CD4-positive, alpha-beta T cell (primary cell): ENCODE measurements at regions of chr1 and their contacts with region 1.

Region 1: DNA sequence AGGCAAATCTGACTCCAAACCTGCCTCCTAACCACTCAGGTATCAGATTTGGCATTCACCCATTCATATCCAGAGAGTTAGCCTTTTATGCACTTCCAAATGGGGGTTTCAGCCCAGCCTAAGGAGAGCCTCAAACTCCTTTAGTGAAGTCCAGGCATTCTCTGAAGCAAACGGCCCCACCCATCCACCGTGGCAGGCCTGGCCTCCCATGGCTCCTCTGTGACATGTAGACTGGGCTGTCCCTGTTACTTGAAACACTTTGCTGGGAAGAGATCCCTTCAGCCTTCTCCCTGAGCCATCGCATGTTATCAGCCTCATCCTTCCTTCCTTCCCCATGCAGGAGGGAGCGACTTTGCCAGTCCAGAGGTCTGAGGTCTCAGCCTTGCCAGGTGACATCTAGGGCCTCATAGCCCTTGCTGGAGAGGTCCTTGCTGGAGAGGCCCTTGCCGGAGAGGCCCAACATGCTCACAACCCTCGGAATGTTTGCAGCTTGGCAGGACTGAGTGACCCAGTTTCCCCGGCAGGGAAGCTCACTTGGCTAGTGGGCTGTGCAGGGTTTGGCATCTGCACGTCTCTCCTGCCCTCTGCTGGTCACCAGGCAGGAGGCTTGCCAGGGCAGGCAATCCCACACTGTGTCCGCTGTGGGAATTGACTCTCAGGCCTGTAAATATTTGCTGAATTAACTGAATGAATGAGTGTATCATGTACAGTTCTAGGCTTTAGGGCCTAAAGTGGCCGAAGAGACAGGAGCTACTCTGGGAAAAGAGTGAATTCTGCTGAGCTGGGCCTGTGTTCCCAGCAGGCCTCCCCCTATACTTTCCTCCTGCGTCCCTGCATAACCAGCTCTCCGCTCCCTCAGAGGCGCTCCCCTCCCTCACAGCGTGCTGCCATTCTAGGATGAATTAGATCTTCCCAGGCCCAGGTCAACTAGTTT is 26.7 kb upstream of the RBM15 start:
- DNase-seq: peak; percentile 62 to 86 (median 70)
- ATAC-seq: peak; percentile 99
- H3K4me3 ChIP-seq: no peak overlapping the region
- H3K4me3 Mint-ChIP-seq: no peak overlapping the region
- H3K27ac ChIP-seq: no peak overlapping the region
- H3K27ac Mint-ChIP-seq: no peak overlapping the region
- H3K4me1 ChIP-seq: peaks cover 7% of the 10 kb centered on the region
- H3K4me1 Mint-ChIP-seq: no peaks in the 10 kb centered on the region
- H3K27me3 ChIP-seq: no peaks in the 10 kb centered on the region
- H3K27me3 Mint-ChIP-seq: no peaks in the 10 kb centered on the region
- CTCF ChIP-seq: peak; percentile 92

Region 2: DNA sequence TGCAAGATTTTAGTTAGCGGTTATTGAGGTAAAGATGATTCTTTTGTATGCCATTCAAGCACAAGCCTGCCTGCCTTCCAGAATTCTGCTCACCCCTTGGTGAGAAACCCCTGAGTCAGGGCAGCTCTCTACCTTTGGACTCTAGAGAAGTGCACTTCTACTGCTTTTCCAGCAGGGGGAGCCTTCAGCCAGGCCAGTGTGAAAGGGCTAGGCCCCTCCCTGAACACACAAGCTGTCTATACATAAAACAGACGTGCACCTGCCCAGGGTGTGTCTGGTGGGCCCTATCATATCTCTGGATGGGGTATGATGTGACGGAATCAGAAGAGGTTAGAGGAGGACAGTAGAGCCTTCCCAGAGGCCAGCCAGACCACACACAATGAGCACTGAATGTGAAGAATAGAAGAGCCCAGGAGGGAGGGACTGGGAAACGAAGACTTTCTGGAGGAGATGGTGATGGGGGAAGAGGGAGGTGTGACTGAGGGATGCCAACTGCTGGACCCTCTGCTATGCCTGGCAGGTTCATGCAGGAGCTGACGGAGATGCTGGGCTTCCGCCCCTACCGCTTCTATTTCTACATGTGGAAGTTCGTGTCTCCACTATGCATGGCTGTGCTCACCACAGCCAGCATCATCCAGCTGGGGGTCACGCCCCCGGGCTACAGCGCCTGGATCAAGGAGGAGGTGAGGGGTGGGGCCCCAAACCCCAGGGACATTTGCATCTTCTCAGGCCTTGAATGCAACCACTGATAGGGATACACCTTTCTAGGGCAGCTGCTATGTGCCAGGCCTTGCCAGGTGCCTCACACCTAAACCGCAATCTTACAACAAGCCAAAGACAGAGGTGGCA is 115.3 kb before region 1 on chr1:
- CTCF ChIA-PET with region 1: interaction called, 60 read pairs
- POLR2A ChIA-PET with region 1: interaction called, 5 read pairs
- intact Hi-C with region 1: no loop called
- DNase-seq: peak; percentile 24 to 75 (median 38)
- ATAC-seq: peak; percentile 99
- H3K4me3 ChIP-seq: no peak overlapping the region
- H3K4me3 Mint-ChIP-seq: no peak overlapping the region
- H3K27ac ChIP-seq: no peak overlapping the region
- H3K27ac Mint-ChIP-seq: no peak overlapping the region
- H3K4me1 ChIP-seq: no peaks in the 10 kb centered on the region
- H3K4me1 Mint-ChIP-seq: no peaks in the 10 kb centered on the region
- H3K27me3 ChIP-seq: no peaks in the 10 kb centered on the region
- H3K27me3 Mint-ChIP-seq: no peaks in the 10 kb centered on the region
- CTCF ChIP-seq: peak; percentile 96

Region 3: GRCh38 chr1:110203021-110203661 is 109.3 kb before region 1 on chr1:
- CTCF ChIA-PET with region 1: interaction called, 123 read pairs
- POLR2A ChIA-PET with region 1: interaction called, 41 read pairs
- intact Hi-C with region 1: loop called (anchors 1 kb)
- DNase-seq: peak; percentile 22 to 88 (median 60)
- ATAC-seq: peak; percentile 76
- H3K4me3 ChIP-seq: no peak overlapping the region
- H3K4me3 Mint-ChIP-seq: no peak overlapping the region
- H3K27ac ChIP-seq: peak overlapping the region in 1 of 2 donors; percentile 30
- H3K27ac Mint-ChIP-seq: peak overlapping the region; percentile 90
- H3K4me1 ChIP-seq: peaks cover 24% of the 10 kb centered on the region
- H3K4me1 Mint-ChIP-seq: peaks cover 36% of the 10 kb centered on the region
- H3K27me3 ChIP-seq: no peaks in the 10 kb centered on the region
- H3K27me3 Mint-ChIP-seq: no peaks in the 10 kb centered on the region
- CTCF ChIP-seq: peak; percentile 78

Region 4: DNA sequence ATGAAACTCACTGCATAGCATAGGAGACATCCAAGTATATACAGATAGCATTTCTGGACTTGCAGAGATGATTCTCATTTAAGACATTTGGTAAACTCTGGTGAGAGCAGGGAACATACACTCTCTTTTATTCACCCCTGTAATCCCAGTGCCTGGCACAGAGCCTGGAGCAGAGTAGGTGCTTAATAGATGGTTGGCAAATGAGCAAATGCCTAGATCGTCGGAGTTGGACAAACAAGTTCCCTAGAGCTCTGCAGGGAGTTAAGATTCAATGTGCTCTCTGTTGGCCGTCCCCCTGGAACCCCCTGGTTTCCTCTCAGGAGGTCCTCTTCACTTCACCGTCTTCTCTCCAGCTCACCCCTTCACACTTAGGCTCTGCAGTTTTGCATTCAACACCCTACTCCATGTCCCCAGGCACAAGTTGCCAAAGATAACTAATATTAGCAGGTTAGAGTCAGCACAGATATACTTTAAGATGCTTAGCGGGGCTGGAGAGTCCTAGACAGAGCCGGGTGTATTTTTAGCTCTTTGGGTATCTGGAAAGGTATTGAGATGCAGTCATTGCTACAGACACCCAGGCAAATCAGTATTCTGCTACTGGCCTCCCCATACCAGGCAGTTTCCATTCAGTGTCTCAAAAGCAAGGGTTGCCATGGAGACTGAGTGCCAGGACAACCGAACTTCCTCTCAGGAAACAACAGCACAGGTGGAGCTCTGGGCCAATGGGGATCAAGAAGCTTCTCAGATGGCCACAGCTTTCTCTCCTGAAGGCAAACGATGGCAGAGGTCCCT is 57.3 kb before region 1 on chr1:
- CTCF ChIA-PET with region 1: no interaction called
- POLR2A ChIA-PET with region 1: no interaction called
- intact Hi-C with region 1: no loop called
- DNase-seq: peak in 2 of 14 experiments; percentile 13 to 27
- ATAC-seq: no peak
- H3K4me3 ChIP-seq: no peak overlapping the region
- H3K4me3 Mint-ChIP-seq: no peak overlapping the region
- H3K27ac ChIP-seq: no peak overlapping the region
- H3K27ac Mint-ChIP-seq: no peak overlapping the region
- H3K4me1 ChIP-seq: peaks cover 4% of the 10 kb centered on the region
- H3K4me1 Mint-ChIP-seq: peaks cover 9% of the 10 kb centered on the region
- H3K27me3 ChIP-seq: no peaks in the 10 kb centered on the region
- H3K27me3 Mint-ChIP-seq: no peaks in the 10 kb centered on the region
- CTCF ChIP-seq: no peak